Adrenal gland (tissue), 19 donors: ENCODE measurements at regions of chr20 and their contacts with region 1.

Region 1: DNA sequence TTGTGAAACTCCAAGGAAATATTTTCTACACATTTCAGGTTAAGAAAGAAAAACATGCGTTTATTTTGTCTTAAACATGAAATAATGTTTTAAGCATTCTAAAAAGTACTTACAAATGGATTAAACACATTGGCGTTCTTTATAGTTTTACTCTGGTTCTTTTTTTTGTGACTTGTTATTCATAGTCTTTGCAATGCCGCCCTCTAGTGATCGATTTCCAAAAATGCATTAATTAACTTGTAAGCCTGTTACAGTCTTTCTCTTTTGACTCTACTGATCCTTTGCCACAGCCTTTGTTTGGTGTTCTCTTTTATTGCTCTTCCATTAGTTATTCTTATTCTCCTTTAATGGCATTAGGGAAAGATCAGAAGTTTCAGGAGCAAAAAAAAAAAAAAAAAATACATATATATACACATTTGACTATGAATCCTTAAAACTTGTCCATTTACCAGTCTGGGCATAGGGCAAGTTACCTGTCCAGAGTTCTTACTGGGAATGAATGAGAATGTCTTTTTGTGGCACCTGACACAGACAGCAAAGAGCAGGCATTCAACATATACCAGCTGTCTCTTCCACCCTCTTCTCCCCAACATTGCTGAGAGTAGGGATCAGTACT is 59.9 kb downstream of the MACROD2 start:
- DNase-seq: peak in 5 of 7 donors; percentile 20 to 48 (median 40)
- H3K4me3 ChIP-seq: no peak overlapping the region
- H3K27ac ChIP-seq: no peak overlapping the region
- H3K4me1 ChIP-seq: no peaks in the 10 kb centered on the region
- H3K27me3 ChIP-seq: no peaks in the 10 kb centered on the region
- CTCF ChIP-seq: peak; percentile 43 to 81 (median 64)
- POLR2A ChIP-seq: no peak

Region 2: DNA sequence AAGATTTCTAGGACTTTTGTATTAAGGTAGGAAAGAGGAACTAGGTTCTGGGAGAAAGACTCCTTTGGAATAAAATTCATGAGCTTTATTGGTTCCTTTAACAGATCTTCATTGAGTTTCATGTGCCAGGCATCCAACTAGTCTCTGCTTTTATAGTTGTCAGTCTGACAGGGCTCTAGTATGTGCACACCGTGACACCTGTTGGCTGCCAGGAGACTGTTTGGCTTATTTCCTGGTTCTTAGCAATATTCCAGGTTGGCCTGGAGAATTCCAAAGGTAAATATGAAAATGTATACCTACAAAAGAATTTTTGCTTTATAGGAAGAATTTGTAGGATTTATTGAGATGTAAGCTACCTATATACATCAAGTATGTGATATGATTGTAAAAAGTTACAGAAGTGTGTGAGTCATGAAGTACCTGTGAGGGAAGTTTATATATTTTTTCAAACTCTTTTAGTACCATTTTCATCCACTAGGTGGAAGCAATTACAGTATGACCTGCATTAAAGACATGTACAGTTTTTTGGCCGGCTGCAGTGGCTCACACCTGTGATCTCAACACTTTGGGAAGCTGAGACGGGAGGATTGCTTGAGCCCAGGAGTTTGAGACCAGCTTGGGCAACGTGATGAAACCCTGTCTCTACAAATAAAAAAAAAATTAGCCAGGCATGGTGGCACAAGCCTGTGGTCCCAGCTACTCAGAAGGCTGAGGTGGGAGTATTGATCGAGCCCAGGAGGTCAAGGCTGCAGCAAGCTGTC is 235.2 kb before region 1 on chr20:
- intact Hi-C with region 1: loop called (anchors 5 to 10 kb)
- DNase-seq: peak in 6 of 7 donors; percentile 30 to 67 (median 38)
- H3K4me3 ChIP-seq: no peak overlapping the region
- H3K27ac ChIP-seq: no peak overlapping the region
- H3K4me1 ChIP-seq: no peaks in the 10 kb centered on the region
- H3K27me3 ChIP-seq: no peaks in the 10 kb centered on the region
- CTCF ChIP-seq: peak; percentile 54 to 77 (median 68)
- POLR2A ChIP-seq: no peak

Region 3: DNA sequence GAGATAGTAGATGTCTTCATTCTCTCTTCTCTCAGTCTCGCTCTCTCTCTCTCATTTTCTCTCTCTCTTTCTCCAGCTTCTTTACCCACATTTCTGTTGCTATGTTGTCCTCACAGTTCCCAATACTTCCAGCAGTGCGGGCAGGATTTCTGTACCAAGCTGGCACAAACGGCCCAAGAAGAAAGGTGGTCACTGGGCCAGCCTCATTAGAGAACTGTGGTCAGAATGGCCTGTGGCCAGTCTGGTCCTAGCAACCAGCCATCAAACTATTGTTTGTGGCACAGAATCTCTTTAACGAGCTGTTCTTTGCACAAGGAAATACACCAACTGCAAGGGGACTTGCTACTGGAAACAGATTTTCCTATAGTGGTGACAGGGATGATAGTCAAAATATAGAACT is 146.2 kb before region 1 on chr20:
- intact Hi-C with region 1: loop called in 1 of 2 experiments (anchors 10 kb)
- DNase-seq: no peak
- H3K4me3 ChIP-seq: no peak overlapping the region
- H3K27ac ChIP-seq: no peak overlapping the region
- H3K4me1 ChIP-seq: no peaks in the 10 kb centered on the region
- H3K27me3 ChIP-seq: no peaks in the 10 kb centered on the region
- CTCF ChIP-seq: no peak
- POLR2A ChIP-seq: no peak

Region 4: DNA sequence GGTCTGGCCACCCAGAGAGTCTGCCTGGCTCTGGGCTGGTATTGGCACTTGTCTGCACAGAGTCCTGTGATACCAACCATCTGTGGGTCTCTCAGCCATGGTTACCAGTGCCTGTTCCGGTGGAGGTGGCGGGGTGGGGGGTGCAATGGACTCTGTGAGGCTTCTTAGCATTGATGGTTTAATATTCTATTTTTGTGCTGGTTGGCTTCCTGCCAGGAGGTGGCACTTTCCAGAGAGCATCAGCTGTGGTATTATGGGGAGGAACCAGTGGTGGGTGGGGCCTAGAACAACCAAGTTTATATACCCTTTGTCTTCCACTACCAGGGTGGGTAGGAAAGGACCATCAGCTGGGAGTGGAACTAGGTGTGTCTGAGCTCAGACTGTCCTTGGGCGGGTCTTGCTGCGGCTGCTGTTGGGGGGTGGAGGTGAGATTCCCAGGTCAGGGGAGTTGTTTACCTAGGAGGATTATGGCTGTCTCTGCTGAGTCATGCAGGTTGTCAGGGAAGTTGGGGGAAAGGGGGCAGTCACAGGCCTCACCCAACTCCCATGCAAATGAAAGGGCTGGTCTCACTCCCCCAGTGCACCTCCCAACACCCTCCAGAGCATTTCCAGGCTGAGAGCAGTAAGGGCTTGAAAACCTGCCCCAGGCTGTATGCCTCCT is 164.7 kb after region 1 on chr20:
- intact Hi-C with region 1: no loop called
- DNase-seq: no peak
- H3K4me3 ChIP-seq: no peak overlapping the region
- H3K27ac ChIP-seq: no peak overlapping the region
- H3K4me1 ChIP-seq: no peaks in the 10 kb centered on the region
- H3K27me3 ChIP-seq: no peaks in the 10 kb centered on the region
- CTCF ChIP-seq: no peak
- POLR2A ChIP-seq: no peak